ENCODE measurements at regions of chr12 and their contacts with region 1.

Region 1: DNA sequence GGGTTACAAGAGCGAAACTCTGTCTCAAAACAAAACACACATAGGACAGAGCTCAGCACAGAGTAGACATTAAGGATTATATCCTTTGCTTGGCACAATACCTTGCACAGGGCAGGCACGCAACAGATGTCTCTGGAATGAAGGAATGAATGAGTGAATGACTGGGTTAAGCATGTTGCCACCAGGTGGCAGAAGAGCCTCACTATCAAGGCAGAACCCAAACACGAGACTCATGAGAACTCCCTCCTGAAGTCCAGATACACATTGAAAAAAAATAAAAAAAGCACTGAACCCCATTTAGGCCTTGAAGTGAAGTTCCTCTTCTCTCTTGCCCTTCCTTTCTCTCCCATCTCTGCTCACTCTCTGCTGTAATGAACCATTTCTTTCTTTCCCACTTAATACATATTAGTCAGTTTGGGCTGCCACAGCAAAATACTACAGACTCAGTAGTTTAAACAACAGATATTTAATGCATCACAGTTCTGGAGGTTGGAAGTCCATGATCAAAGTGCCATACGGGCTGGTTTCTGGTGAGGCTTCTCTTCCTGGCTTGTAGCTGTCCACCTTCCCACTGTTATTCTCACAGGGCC is 26.6 kb upstream of the LTA4H start:
- DNase-seq: peak in 3 of 4 donors; percentile 70 to 87 (median 72)
- ATAC-seq: peak; percentile 96
- H3K4me3 ChIP-seq: no peak overlapping the region
- H3K27ac ChIP-seq: no peak overlapping the region
- H3K4me1 ChIP-seq: peaks cover 5 to 19% of the 10 kb centered on the region in 2 donors
- H3K27me3 ChIP-seq: no peaks in the 10 kb centered on the region
- CTCF ChIP-seq: peak; percentile 83

Region 2: GRCh38 chr12:96219698-96220206 is 157.8 kb after region 1 on chr12:
- intact Hi-C with region 1: loop called in 1 of 2 experiments (anchors 5 kb)
- DNase-seq: peak in 3 of 4 donors; percentile 59 to 90 (median 89)
- ATAC-seq: peak; percentile 94
- H3K4me3 ChIP-seq: no peak overlapping the region
- H3K27ac ChIP-seq: peak overlapping the region; percentile 74 to 81
- H3K4me1 ChIP-seq: peaks cover 0 to 38% of the 10 kb centered on the region in 2 donors
- H3K27me3 ChIP-seq: no peaks in the 10 kb centered on the region
- CTCF ChIP-seq: no peak

Region 3: DNA sequence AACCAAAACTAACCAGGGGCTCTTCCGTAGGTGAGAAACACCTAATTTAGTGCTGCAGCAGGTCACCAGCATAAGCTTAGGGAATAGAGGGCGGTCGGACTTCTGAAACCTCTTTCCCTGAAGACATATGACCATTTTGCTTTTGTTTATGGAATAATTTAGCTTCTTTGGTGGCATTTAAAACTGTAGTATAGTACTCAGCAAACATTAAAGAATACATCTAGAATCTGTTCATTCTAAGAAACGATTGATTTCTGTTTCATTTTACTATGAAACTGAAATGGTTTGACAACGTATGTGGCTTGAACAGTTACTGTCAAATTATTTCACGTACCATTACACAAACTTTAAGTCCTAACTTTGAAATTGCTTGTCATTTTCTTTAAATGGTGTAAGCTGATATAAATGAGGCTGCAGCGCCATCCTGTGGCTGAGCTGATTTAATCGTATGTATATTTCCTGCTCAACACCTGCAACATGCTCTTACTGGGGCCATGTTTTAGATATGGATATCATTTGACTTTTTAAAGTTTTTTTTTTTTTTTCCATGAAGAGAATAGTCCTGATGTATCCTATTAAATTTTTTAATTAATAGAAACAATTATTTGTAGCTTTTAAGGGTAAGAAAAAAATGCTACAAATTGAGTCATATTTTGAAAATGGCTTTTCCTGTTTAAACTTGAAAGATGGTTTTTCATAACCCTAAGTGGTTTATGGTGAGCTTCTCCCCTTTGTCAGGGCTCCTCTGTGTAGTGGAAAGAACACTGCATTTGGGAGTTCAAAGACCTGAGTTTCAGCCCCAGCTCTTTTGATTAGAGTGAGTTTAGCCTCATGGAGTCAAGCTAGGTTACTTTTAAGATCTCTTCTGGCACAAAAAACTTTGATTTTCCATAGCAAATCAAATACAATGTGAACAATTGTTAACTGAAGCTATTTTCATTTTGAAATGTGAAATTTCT is 454.8 kb after region 1 on chr12:
- intact Hi-C with region 1: loop called in 1 of 2 experiments (anchors 5 kb)
- DNase-seq: peak in 3 of 4 donors; percentile 61 to 84 (median 72)
- ATAC-seq: peak; percentile 92
- H3K4me3 ChIP-seq: no peak overlapping the region
- H3K27ac ChIP-seq: no peak overlapping the region
- H3K4me1 ChIP-seq: peaks cover 0 to 11% of the 10 kb centered on the region in 2 donors
- H3K27me3 ChIP-seq: no peaks in the 10 kb centered on the region
- CTCF ChIP-seq: peak; percentile 64 to 70

Measured in left lung (tissue), 14 donors.